ENCODE measurements at regions of chr1 and their contacts with region 1.

Region 1: GRCh38 chr1:222171005-222171404 is 376.9 kb downstream of the HHIPL2 start:
- DNase-seq: no peak
- ATAC-seq: peak; percentile 52
- H3K4me3 Mint-ChIP-seq: no peak overlapping the region
- H3K27ac Mint-ChIP-seq: no peak overlapping the region
- H3K4me1 Mint-ChIP-seq: no peaks in the 10 kb centered on the region
- H3K27me3 Mint-ChIP-seq: peaks cover 16% of the 10 kb centered on the region
- CTCF ChIP-seq: no peak

Region 2: DNA sequence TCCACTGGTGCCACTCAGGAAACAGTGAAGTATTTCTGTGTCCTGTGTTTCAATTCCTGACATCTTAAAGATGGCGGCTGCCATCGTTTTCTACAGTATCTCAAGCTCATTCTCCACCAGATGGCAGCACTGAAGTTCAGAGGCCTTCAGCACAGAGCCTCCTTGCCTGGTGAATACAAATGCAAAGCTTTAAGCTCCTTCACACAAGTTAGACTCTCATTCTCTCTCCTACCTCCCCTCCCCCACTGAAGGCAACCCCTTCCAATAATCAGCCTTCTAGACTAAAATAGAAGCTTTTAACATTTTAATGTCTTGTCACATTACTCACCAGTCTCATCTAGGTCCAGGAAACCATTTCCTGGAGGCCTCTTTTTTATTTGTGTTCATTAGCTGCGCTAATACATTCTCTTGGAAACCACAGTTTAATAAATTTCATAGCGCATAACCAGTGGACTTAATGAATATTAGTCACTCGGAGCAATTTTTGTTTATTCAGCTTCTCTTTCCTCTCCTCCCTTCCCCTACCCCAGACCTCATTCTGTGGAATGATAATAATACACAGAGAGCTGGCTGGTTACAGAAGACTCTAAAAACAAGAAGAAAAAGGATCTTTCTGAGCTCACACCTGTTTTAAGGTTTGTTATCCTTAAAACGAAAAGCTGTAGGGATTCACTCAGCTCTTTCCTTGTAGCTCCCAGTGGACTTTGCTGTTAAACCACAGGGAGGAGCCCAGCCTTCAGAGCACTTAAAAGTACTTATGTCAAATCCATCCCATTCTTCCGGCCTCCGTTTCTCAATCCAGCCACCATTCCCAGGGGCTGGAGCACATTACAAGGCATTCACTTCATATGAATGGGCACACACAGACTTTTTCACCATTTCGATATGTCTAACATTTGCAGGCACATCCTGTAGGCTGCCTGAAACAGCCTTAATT is 906.9 kb before region 1 on chr1:
- CTCF ChIA-PET with region 1: interaction called, 10 read pairs
- POLR2A ChIA-PET with region 1: no interaction called
- intact Hi-C with region 1: loop called (anchors 1 kb)
- DNase-seq: no peak
- ATAC-seq: peak; percentile 69
- H3K4me3 Mint-ChIP-seq: no peak overlapping the region
- H3K27ac Mint-ChIP-seq: no peak overlapping the region
- H3K4me1 Mint-ChIP-seq: no peaks in the 10 kb centered on the region
- H3K27me3 Mint-ChIP-seq: peaks cover 19% of the 10 kb centered on the region
- CTCF ChIP-seq: no peak

Region 3: GRCh38 chr1:221543529-221544120 is 627.4 kb before region 1 on chr1:
- CTCF ChIA-PET with region 1: interaction called, 3 read pairs
- POLR2A ChIA-PET with region 1: no interaction called
- intact Hi-C with region 1: loop called (anchors 10 kb)
- DNase-seq: no peak
- ATAC-seq: no peak
- H3K4me3 Mint-ChIP-seq: no peak overlapping the region
- H3K27ac Mint-ChIP-seq: no peak overlapping the region
- H3K4me1 Mint-ChIP-seq: no peaks in the 10 kb centered on the region
- H3K27me3 Mint-ChIP-seq: peaks cover under 1% of the 10 kb centered on the region
- CTCF ChIP-seq: no peak

Region 4: GRCh38 chr1:222140206-222140605 is 30.8 kb before region 1 on chr1:
- CTCF ChIA-PET with region 1: no interaction called
- POLR2A ChIA-PET with region 1: no interaction called
- intact Hi-C with region 1: no loop called
- DNase-seq: no peak
- ATAC-seq: no peak
- H3K4me3 Mint-ChIP-seq: no peak overlapping the region
- H3K27ac Mint-ChIP-seq: no peak overlapping the region
- H3K4me1 Mint-ChIP-seq: no peaks in the 10 kb centered on the region
- H3K27me3 Mint-ChIP-seq: peaks cover 2% of the 10 kb centered on the region
- CTCF ChIP-seq: no peak